ENCODE measurements at regions of chr10 and their contacts with region 1.

Region 1: DNA sequence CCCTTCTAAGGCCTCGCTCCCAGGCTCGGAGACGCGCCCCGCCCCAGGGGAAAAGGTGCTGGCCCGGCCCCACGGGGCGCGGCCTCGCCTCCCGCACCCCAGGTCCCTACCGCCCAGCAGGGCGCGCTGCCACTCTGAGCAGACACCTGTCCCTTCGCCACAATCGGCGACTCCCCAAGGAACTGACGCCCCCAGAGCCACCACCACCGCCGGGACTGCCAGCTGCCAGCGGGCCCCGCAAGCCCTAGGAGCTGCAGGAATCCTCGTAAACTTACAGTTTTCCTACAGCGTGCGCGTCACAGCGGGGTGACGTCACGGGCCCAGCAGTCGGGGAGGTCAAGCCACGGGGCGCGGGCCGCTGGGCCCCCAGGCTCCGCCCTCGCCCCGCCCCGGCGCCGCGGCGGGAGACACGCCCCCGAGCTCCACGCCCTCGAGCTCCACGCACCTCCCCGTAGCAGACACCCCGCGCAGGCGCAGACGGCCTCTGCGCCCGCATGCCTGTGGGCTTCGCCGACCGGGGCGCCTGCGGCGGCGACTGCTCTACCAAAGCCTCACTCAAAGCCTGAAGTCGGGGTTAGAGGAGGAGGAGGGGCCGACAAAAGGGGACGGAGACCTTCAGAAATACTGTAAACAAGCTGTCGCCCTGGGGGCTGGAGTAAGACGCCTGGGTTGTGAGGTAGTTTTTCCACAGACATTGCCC is at the start of gene ZNF438:
- DNase-seq: peak; percentile 72 to 95
- H3K4me3 ChIP-seq: peak within 1 kb of the TSS; percentile 70
- H3K27ac ChIP-seq: peak within 1 kb of the TSS; percentile 93
- H3K4me1 ChIP-seq: peaks cover 24% of the 10 kb centered on the region
- H3K27me3 ChIP-seq: no peaks in the 10 kb centered on the region
- CTCF ChIP-seq: peak; percentile 66
- total RNA-seq, gene ZNF438: 4.6 and 4.7 TPM in 2 replicates

Region 2: DNA sequence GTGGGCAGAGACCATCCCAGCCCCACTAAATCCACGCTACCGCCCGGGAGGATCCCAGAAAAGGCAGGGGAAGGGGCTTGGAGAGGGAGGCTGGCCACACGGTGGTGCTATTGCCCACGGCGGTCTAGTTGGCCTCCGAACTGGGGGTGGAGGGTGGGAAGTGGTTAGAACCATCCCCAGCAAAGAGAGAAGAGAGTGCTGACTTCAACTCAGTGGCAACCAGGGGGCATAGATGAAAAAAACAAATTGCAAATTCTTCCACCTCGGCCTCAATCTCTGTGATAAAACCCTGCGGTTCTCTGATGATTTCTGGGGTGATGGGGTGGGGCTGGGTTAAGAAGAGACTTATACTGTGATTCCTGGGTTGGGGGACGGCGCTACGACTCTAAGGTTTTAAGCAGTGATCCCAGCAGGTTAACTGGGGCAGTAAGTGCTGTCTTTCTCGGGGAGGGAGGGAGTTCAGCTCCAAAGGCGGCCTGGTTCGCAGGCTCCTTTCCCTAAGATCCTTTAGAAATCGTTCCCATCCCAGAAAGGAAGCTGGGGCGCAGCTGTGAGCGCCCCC is 247.7 kb before region 1 on chr10:
- CTCF ChIA-PET with region 1: interaction called, 8 read pairs
- POLR2A ChIA-PET with region 1: interaction called, 6 read pairs
- intact Hi-C with region 1: loop called (anchors 1 kb)
- DNase-seq: peak in 1 of 2 experiments; percentile 67
- H3K4me3 ChIP-seq: no peak overlapping the region
- H3K27ac ChIP-seq: no peak overlapping the region
- H3K4me1 ChIP-seq: no peaks in the 10 kb centered on the region
- H3K27me3 ChIP-seq: no peaks in the 10 kb centered on the region
- CTCF ChIP-seq: peak; percentile 73

Region 3: DNA sequence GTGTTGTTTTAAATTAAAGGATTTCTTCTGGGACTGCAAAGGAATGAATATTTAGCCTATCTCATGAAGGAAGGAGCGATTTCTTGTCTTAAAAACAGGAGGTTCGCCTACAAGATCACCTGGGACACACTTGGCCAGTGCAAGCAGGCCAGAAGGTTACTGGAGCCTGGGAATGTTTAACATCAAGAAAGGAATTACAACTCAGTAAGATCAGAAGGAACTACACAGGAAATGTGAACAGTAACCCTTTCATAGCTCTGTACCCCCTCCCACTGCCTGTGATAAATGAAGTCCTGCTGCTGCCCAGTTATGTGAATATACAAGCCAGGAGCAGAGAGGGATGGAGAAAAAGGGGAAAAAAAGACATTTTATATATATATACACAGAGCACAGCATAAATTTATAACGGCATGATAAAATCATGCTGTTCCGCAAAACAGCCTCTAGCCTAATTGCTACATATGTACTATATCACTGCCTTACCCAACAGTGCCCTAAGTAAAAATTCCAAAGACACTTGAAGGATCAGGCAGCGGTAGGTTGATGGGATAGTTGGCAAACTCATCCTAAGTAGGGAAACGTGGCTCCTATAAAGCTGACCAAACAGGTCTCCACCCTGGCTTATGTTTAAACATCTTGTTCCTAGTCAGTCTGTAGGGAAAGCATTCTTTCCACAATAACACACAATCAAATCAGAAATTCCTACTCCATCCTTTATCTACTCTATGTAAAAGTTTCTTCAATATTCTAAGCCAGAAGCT is 63.9 kb before region 1 on chr10:
- CTCF ChIA-PET with region 1: no interaction called
- POLR2A ChIA-PET with region 1: no interaction called
- intact Hi-C with region 1: no loop called
- DNase-seq: no peak
- H3K4me3 ChIP-seq: no peak overlapping the region
- H3K27ac ChIP-seq: no peak overlapping the region
- H3K4me1 ChIP-seq: no peaks in the 10 kb centered on the region
- H3K27me3 ChIP-seq: no peaks in the 10 kb centered on the region
- CTCF ChIP-seq: no peak

Region 4: DNA sequence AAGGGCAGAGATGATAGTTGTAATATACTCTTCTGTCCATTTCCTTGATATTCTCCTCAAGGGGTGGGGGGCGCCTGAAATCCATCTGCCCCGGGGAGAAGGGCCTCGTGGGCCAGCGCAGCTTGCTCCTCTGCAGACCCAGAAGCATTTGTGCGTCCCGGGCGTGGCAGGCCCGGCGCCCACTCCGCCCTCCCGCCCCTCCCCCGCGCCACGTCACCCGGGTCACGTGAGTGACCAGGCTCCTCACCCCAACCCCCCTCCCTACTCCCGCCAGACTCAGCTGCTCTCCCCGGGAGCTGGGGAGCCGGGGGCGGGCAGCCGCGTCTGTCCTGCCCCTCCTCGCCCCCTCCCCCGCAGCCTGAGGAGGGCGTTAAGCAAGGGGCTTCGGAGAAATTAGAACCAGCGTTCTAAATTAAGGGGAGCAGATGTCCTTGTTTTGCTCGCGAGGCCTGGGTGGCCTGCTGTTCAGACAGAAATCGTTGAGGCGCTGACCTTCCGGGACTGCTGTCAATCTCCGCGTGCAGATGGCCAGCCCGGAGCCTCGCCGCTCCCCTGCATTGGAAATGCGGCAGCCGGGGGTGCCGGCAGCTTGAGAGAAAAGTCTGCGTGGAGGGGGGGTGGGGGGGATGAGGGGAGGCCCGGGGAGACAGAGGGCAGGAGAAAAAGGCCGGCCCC is 102.1 kb after region 1 on chr10:
- CTCF ChIA-PET with region 1: interaction called, 6 read pairs
- POLR2A ChIA-PET with region 1: interaction called, 5 read pairs
- intact Hi-C with region 1: loop called (anchors 1 kb)
- DNase-seq: peak in 1 of 2 experiments; percentile 53
- H3K4me3 ChIP-seq: peak overlapping the region; percentile 56; the same call in 1 of the 2 replicates
- H3K27ac ChIP-seq: peak overlapping the region; percentile 79
- H3K4me1 ChIP-seq: peaks cover 30% of the 10 kb centered on the region
- H3K27me3 ChIP-seq: no peaks in the 10 kb centered on the region
- CTCF ChIP-seq: no peak

Region 5: DNA sequence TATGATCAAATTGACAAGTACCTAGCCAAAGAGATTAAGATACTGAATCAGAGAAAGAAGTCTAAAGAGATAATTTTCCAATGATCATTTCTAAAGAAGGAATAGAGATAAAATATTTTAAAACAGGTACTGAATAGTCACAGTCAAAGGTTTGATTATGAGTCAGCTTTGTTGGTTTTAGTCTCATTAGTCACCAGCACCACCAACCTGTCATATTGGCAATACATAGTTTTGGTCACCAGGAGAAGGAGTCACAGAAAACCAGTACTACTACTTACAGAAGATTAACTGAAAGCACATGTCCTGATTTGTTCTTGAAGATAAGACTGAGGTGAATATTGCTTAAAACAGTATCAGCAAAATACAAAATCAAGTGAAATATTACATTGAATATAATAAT is 321.9 kb after region 1 on chr10:
- CTCF ChIA-PET with region 1: no interaction called
- POLR2A ChIA-PET with region 1: no interaction called
- intact Hi-C with region 1: loop called (anchors 1 kb)
- DNase-seq: peak; percentile 31 to 85
- H3K4me3 ChIP-seq: no peak overlapping the region
- H3K27ac ChIP-seq: peak overlapping the region; percentile 62
- H3K4me1 ChIP-seq: peaks cover 17% of the 10 kb centered on the region
- H3K27me3 ChIP-seq: no peaks in the 10 kb centered on the region
- CTCF ChIP-seq: peak; percentile 42; the same call in 1 of the 2 replicates

Region 6: GRCh38 chr10:31582365-31583052 is 550.8 kb after region 1 on chr10:
- CTCF ChIA-PET with region 1: interaction called, 3 read pairs
- POLR2A ChIA-PET with region 1: interaction called, 12 read pairs
- intact Hi-C with region 1: no loop called
- DNase-seq: peak; percentile 80 to 82
- H3K4me3 ChIP-seq: no peak overlapping the region
- H3K27ac ChIP-seq: peak overlapping the region; percentile 47; the same call in 1 of the 2 replicates
- H3K4me1 ChIP-seq: peaks cover 18% of the 10 kb centered on the region
- H3K27me3 ChIP-seq: no peaks in the 10 kb centered on the region
- CTCF ChIP-seq: no peak

Measured in PC-9 (cell line).